GM10248 (cell line): ENCODE measurements at regions of chr7 and their contacts with region 1.

Region 1: DNA sequence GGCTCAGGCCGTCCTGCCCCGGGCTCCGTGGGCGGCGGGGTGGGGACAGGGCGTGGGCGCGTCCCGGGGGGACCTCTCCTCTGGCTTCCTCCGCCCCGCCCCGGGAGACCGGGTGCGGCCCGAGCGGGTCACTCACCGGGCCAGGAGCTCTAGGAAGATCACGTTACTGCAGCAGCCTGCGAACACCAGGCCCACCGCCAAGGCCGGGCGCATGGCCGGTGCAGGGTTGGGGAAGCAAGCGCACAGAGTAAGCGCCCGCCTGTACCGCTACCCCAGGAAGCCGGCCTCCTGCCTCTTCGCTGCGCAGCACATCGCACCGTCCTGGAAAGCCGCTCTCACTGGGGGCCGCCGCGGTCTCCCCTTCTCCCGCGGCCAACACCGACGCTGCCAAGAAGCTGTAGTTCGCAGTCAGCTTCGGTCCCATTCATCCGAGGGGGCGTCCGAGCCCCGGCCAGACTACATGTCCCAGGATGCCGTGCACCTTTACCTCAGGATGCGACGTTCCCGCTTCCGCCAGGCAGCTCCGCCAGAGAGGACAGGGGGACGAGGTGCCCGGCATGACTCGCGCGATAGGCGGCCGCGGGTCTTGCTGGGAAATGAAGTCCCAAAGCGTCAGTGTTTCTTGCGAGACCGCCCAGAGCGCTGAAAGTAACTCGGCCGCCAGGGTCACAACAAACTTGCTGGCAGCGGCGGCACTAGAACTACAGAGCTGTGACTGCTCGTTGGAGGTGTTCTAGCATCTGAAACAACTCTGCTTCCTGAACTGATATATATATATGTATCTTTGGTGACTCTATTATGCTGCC is at the start of gene SLC35B4:
- DNase-seq: peak; percentile 97
- CTCF ChIP-seq: no peak

Region 2: GRCh38 chr7:134327896-134328295 is 11.2 kb after region 1 on chr7:
- CTCF ChIA-PET with region 1: interaction called, 19 read pairs
- POLR2A ChIA-PET with region 1: no interaction called
- DNase-seq: peak; percentile 49
- CTCF ChIP-seq: peak; percentile 53